Left lung (tissue), 14 donors: ENCODE measurements at regions of chr4 and their contacts with region 1.

Region 1: GRCh38 chr4:184553896-184554295 is 79.5 kb upstream of the IRF2 start:
- DNase-seq: no peak
- ATAC-seq: no peak
- H3K4me3 ChIP-seq: no peak overlapping the region
- H3K27ac ChIP-seq: no peak overlapping the region
- H3K4me1 ChIP-seq: no peaks in the 10 kb centered on the region
- H3K27me3 ChIP-seq: no peaks in the 10 kb centered on the region
- CTCF ChIP-seq: no peak

Region 2: GRCh38 chr4:184267673-184268583 is 286.0 kb before region 1 on chr4:
- intact Hi-C with region 1: loop called in 1 of 2 experiments (anchors 5 kb)
- DNase-seq: peak in 2 of 4 donors; percentile 81 to 82
- ATAC-seq: peak; percentile 78
- H3K4me3 ChIP-seq: peak overlapping the region; percentile 4 to 17
- H3K27ac ChIP-seq: peak overlapping the region; percentile 77 to 94
- H3K4me1 ChIP-seq: peaks cover 0 to 30% of the 10 kb centered on the region in 2 donors
- H3K27me3 ChIP-seq: no peaks in the 10 kb centered on the region
- CTCF ChIP-seq: no peak

Region 3: GRCh38 chr4:185128272-185129119 is 574.6 kb after region 1 on chr4:
- intact Hi-C with region 1: no loop called
- DNase-seq: peak in 2 of 4 donors; percentile 36 to 78
- ATAC-seq: peak; percentile 74
- H3K4me3 ChIP-seq: peak overlapping the region; percentile 47 to 48
- H3K27ac ChIP-seq: peak overlapping the region; percentile 60 to 64
- H3K4me1 ChIP-seq: peaks cover 4 to 23% of the 10 kb centered on the region in 2 donors
- H3K27me3 ChIP-seq: peaks cover 8 to 60% of the 10 kb centered on the region in 2 donors
- CTCF ChIP-seq: peak in 1 of 2 donors; percentile 22